CD4-positive, alpha-beta memory T cell (primary cell): ENCODE measurements at regions of chr15 and their contacts with region 1.

Region 1: GRCh38 chr15:91022075-91022835 is at the start of gene VPS33B:
- DNase-seq: peak; percentile 78 to 83 (median 80)
- H3K4me3 ChIP-seq: peak within 1 kb of the TSS; percentile 80 to 82
- H3K4me3 Mint-ChIP-seq: peak within 1 kb of the TSS; percentile 96 to 99 (median 98)
- H3K27ac ChIP-seq: peak within 1 kb of the TSS; percentile 83
- H3K27ac Mint-ChIP-seq: peak within 1 kb of the TSS; percentile 88 to 98 (median 97)
- H3K4me1 ChIP-seq: peaks cover 34% of the 10 kb centered on the region
- H3K4me1 Mint-ChIP-seq: peaks cover 31 to 57% (median 41%) of the 10 kb centered on the region in 4 donors
- H3K27me3 ChIP-seq: no peaks in the 10 kb centered on the region
- H3K27me3 Mint-ChIP-seq: no peaks in the 10 kb centered on the region
- total RNA-seq, gene VPS33B: 26.9 to 27.8 TPM

Region 2: DNA sequence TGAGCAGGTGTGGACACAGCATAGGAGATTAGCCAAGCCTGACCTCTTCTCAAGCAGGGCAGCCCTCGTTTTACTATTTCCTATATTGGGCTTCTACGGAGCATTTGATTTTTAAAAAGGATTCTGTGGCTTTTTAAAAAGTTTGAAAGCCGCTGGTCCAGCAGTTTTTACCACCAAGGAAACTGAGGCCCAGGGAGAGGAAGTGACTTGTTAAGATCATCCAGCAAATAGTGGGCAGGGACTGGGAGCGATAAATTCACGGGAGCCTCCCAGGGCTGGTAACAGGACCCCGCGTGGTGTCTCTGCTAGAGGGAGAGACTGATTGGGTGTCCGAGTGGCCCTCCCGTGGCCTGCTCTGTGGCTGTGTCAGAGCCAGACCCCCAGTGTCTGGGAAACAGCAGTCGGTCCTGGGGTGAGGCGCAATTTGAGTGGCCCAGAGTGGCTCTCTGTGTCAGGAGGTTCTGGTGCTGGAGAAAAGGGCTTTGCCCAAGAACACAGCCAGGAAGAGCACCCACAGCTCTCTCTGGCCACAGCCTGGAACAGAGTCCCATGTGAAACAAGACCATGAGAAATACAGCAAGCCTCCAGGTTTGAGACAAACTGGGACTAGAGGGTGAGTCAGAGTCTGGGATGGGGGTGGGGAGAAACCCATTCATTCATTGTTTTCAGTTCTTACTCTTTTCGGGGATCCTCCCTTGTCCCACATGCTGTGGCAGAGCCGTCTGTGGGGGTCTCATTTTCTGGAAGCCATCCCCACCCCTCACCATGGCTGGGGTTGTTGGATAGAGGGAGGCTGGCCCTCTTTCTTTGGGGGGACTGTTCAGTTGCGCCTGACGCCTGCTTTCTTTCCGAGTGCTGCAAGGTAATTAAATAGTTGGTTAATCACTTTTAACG is 149.5 kb before region 1 on chr15:
- CTCF ChIA-PET with region 1: no interaction called
- POLR2A ChIA-PET with region 1: no interaction called
- intact Hi-C with region 1: no loop called
- DNase-seq: peak in 1 of 5 donors; percentile 57
- H3K4me3 ChIP-seq: peak overlapping the region; percentile 57 to 88
- H3K4me3 Mint-ChIP-seq: peak overlapping the region; percentile 86 to 89 (median 88)
- H3K27ac ChIP-seq: peak overlapping the region; percentile 60
- H3K27ac Mint-ChIP-seq: peak overlapping the region; percentile 80 to 94 (median 92)
- H3K4me1 ChIP-seq: peaks cover 46% of the 10 kb centered on the region
- H3K4me1 Mint-ChIP-seq: peaks cover 23 to 59% (median 40%) of the 10 kb centered on the region in 4 donors
- H3K27me3 ChIP-seq: no peaks in the 10 kb centered on the region
- H3K27me3 Mint-ChIP-seq: no peaks in the 10 kb centered on the region

Region 3: GRCh38 chr15:90994417-90995311 is 27.6 kb before region 1 on chr15 and contains the start of gene PRC1:
- CTCF ChIA-PET with region 1: interaction called, 4 read pairs
- POLR2A ChIA-PET with region 1: interaction called, 6 read pairs
- intact Hi-C with region 1: loop called (anchors 1 kb)
- DNase-seq: peak; percentile 96 to 98 (median 97)
- H3K4me3 ChIP-seq: peak within 1 kb of the TSS; percentile 73 to 90
- H3K4me3 Mint-ChIP-seq: peak within 1 kb of the TSS; percentile 98 to 100 (median 99)
- H3K27ac ChIP-seq: peak within 1 kb of the TSS; percentile 88
- H3K27ac Mint-ChIP-seq: peak within 1 kb of the TSS; percentile 79 to 99 (median 99)
- H3K4me1 ChIP-seq: peaks cover 9% of the 10 kb centered on the region
- H3K4me1 Mint-ChIP-seq: peaks cover 7 to 32% (median 21%) of the 10 kb centered on the region in 4 donors
- H3K27me3 ChIP-seq: no peaks in the 10 kb centered on the region
- H3K27me3 Mint-ChIP-seq: no peaks in the 10 kb centered on the region
- total RNA-seq, gene PRC1: 8.1 to 8.6 TPM

Region 4: DNA sequence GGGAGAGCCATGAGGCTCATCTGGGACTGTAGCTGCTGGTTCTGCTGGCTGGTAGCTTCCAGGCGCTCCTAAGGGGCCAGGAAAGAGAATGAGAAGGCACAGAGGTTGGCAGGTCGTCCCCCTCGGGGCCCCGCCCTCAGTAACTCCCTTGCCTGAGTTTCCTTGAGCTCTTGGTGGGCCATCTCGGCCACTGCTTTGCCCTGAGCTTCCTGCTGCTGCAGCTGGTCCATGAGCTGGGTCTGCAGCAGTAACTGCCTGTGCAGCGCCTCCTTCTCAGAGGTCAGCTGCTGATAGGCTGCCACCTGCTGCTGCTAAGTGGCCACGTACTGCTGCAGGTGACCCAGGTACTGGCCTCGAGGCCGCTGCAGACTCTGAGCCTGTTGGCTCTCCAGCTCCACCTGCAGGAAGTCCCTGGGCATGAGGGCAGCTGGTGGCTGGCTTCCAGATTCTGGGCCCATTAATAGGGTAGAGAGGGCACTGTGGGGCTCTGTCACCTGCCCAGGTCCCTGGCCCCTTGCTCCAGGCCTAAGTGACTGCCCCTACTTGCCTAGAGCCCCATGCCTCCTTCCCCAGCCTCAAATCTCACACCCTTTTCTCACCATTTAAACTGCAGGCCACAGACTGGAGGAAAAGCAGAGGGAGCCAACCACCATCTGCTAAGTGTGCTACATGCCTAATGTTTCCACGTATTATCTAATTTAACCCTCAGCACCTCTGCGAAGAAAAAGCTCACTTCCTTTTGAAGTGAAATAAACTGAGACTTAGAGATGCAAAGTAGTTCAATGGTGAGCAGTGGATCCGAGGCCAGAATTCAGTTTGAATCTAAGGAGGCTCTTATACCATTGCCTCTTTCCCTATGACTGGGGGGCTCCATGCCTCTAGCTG is 10.9 kb after region 1 on chr15:
- CTCF ChIA-PET with region 1: interaction called, 20 read pairs
- POLR2A ChIA-PET with region 1: interaction called, 5 read pairs
- intact Hi-C with region 1: no loop called
- DNase-seq: peak; percentile 40 to 54 (median 46)
- H3K4me3 ChIP-seq: no peak overlapping the region
- H3K4me3 Mint-ChIP-seq: no peak overlapping the region
- H3K27ac ChIP-seq: no peak overlapping the region
- H3K27ac Mint-ChIP-seq: peak overlapping the region in 3 of 7 donors; percentile 49 to 59 (median 50)
- H3K4me1 ChIP-seq: no peaks in the 10 kb centered on the region
- H3K4me1 Mint-ChIP-seq: peaks cover 1 to 13% (median 5%) of the 10 kb centered on the region in 4 donors
- H3K27me3 ChIP-seq: no peaks in the 10 kb centered on the region
- H3K27me3 Mint-ChIP-seq: no peaks in the 10 kb centered on the region

Region 5: GRCh38 chr15:91049378-91050127 is 27.3 kb after region 1 on chr15:
- CTCF ChIA-PET with region 1: interaction called, 12 read pairs
- POLR2A ChIA-PET with region 1: no interaction called
- intact Hi-C with region 1: no loop called
- DNase-seq: peak; percentile 50 to 66 (median 60)
- H3K4me3 ChIP-seq: no peak overlapping the region
- H3K4me3 Mint-ChIP-seq: no peak overlapping the region
- H3K27ac ChIP-seq: no peak overlapping the region
- H3K27ac Mint-ChIP-seq: no peak overlapping the region
- H3K4me1 ChIP-seq: peaks cover 21% of the 10 kb centered on the region
- H3K4me1 Mint-ChIP-seq: peaks cover 11 to 30% (median 26%) of the 10 kb centered on the region in 4 donors
- H3K27me3 ChIP-seq: no peaks in the 10 kb centered on the region
- H3K27me3 Mint-ChIP-seq: peaks cover 8 to 10% of the 10 kb centered on the region in 2 donors